ENCODE measurements at regions of chr3 and their contacts with region 1.

Region 1: GRCh38 chr3:46892285-46893163 is 15.0 kb downstream of the PTH1R start:
- DNase-seq: no peak
- H3K4me3 ChIP-seq: peak overlapping the region; percentile 12 to 62 (median 36)
- H3K27ac ChIP-seq: no peak overlapping the region
- H3K4me1 ChIP-seq: peaks cover 8 to 30% (median 10%) of the 10 kb centered on the region in 3 donors
- H3K27me3 ChIP-seq: peaks cover 0 to 68% (median 0%) of the 10 kb centered on the region in 4 donors
- CTCF ChIP-seq: peak in 1 of 6 experiments; percentile 4
- POLR2A ChIP-seq: no peak

Region 2: GRCh38 chr3:46705022-46705530 is 187.4 kb before region 1 on chr3:
- intact Hi-C with region 1: loop called (anchors 5 kb)
- DNase-seq: no peak
- H3K4me3 ChIP-seq: no peak overlapping the region
- H3K27ac ChIP-seq: no peak overlapping the region
- H3K4me1 ChIP-seq: peaks cover 15 to 32% (median 18%) of the 10 kb centered on the region in 3 donors
- H3K27me3 ChIP-seq: peaks cover 0 to 31% (median 0%) of the 10 kb centered on the region in 4 donors
- CTCF ChIP-seq: peak; percentile 90 to 97 (median 96)
- POLR2A ChIP-seq: no peak

Region 3: GRCh38 chr3:47042231-47042791 is 149.8 kb after region 1 on chr3:
- intact Hi-C with region 1: no loop called
- DNase-seq: no peak
- H3K4me3 ChIP-seq: no peak overlapping the region
- H3K27ac ChIP-seq: no peak overlapping the region
- H3K4me1 ChIP-seq: peaks cover 0 to 10% (median 0%) of the 10 kb centered on the region in 3 donors
- H3K27me3 ChIP-seq: no peaks in the 10 kb centered on the region
- CTCF ChIP-seq: no peak
- POLR2A ChIP-seq: no peak